Transverse colon (tissue), 4 donors: ENCODE measurements at regions of chr14 and their contacts with region 1.

Region 1: GRCh38 chr14:103880348-103881267 is 33.2 kb upstream of the PPP1R13B start:
- DNase-seq: peak; percentile 72
- H3K4me3 ChIP-seq: peak overlapping the region in 2 of 4 donors; percentile 23 to 33
- H3K27ac ChIP-seq: peak overlapping the region; percentile 83 to 92 (median 86)
- H3K4me1 ChIP-seq: peaks cover 29 to 50% (median 35%) of the 10 kb centered on the region in 4 donors
- H3K27me3 ChIP-seq: no peaks in the 10 kb centered on the region
- CTCF ChIP-seq: no peak
- EP300 ChIP-seq: no peak
- POLR2A ChIP-seq: no peak

Region 2: GRCh38 chr14:102262929-102263462 is 1617.6 kb before region 1 on chr14:
- in situ Hi-C with region 1: no loop called
- intact Hi-C with region 1: loop called (anchors 5 kb)
- DNase-seq: no peak
- H3K4me3 ChIP-seq: no peak overlapping the region
- H3K27ac ChIP-seq: no peak overlapping the region
- H3K4me1 ChIP-seq: no peaks in the 10 kb centered on the region
- H3K27me3 ChIP-seq: no peaks in the 10 kb centered on the region
- CTCF ChIP-seq: no peak
- EP300 ChIP-seq: no peak
- POLR2A ChIP-seq: no peak

Region 3: GRCh38 chr14:103372603-103373304 is 507.9 kb before region 1 on chr14:
- in situ Hi-C with region 1: no loop called
- intact Hi-C with region 1: no loop called
- DNase-seq: no peak
- H3K4me3 ChIP-seq: no peak overlapping the region
- H3K27ac ChIP-seq: no peak overlapping the region
- H3K4me1 ChIP-seq: no peaks in the 10 kb centered on the region
- H3K27me3 ChIP-seq: no peaks in the 10 kb centered on the region
- CTCF ChIP-seq: no peak
- EP300 ChIP-seq: no peak
- POLR2A ChIP-seq: no peak

Region 4: DNA sequence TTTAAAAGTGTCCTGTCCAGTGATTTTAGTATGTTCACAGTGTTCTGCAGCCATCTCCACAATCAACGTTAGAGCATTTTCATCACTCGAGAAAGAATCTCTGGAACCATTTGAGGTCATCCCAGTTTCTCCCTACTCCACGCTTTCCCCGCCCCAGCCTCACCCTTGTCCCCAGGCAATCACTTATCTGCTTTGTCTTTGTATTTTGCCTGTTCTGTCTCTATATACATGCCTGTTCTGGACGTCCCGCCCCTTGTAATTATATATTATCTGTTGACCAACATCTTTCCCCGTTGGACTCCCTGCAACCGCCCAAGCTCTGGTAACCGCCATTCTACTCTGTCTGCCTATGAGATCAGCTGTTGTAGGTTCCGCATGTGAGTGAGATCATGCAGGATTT is 183.4 kb after region 1 on chr14:
- in situ Hi-C with region 1: no loop called
- intact Hi-C with region 1: no loop called
- DNase-seq: no peak
- H3K4me3 ChIP-seq: no peak overlapping the region
- H3K27ac ChIP-seq: no peak overlapping the region
- H3K4me1 ChIP-seq: no peaks in the 10 kb centered on the region
- H3K27me3 ChIP-seq: peaks cover 7% of the 10 kb centered on the region
- CTCF ChIP-seq: no peak
- EP300 ChIP-seq: no peak
- POLR2A ChIP-seq: no peak